A673 (cell line): ENCODE measurements at regions of chr7 and their contacts with region 1.

Region 1: GRCh38 chr7:13262929-13263530 is 575.6 kb downstream of the ARL4A start:
- DNase-seq: peak; percentile 52
- H3K4me3 ChIP-seq: no peak overlapping the region
- H3K27ac ChIP-seq: no peak overlapping the region
- H3K4me1 ChIP-seq: no peaks in the 10 kb centered on the region
- H3K27me3 ChIP-seq: peaks cover 7% of the 10 kb centered on the region
- CTCF ChIP-seq: peak; percentile 68

Region 2: GRCh38 chr7:12638851-12639467 is 624.1 kb before region 1 on chr7:
- CTCF ChIA-PET with region 1: no interaction called
- POLR2A ChIA-PET with region 1: no interaction called
- intact Hi-C with region 1: loop called (anchors 2 kb)
- DNase-seq: peak; percentile 66
- H3K4me3 ChIP-seq: no peak overlapping the region
- H3K27ac ChIP-seq: no peak overlapping the region
- H3K4me1 ChIP-seq: no peaks in the 10 kb centered on the region
- H3K27me3 ChIP-seq: no peaks in the 10 kb centered on the region
- CTCF ChIP-seq: peak; percentile 65

Region 3: GRCh38 chr7:12674849-12675248 is 588.2 kb before region 1 on chr7:
- CTCF ChIA-PET with region 1: no interaction called
- POLR2A ChIA-PET with region 1: no interaction called
- intact Hi-C with region 1: loop called (anchors 2 kb)
- DNase-seq: peak; percentile 70
- H3K4me3 ChIP-seq: no peak overlapping the region
- H3K27ac ChIP-seq: no peak overlapping the region
- H3K4me1 ChIP-seq: no peaks in the 10 kb centered on the region
- H3K27me3 ChIP-seq: no peaks in the 10 kb centered on the region
- CTCF ChIP-seq: peak; percentile 75